ENCODE measurements at regions of chr12 and their contacts with region 1.

Region 1: GRCh38 chr12:42663621-42664020 is 74.1 kb upstream of the PRICKLE1 start:
- DNase-seq: no peak
- H3K4me3 ChIP-seq: no peak overlapping the region
- H3K27ac ChIP-seq: no peak overlapping the region
- H3K4me1 ChIP-seq: no peaks in the 10 kb centered on the region
- H3K27me3 ChIP-seq: no peaks in the 10 kb centered on the region
- CTCF ChIP-seq: no peak
- POLR2A ChIP-seq: no peak

Region 2: DNA sequence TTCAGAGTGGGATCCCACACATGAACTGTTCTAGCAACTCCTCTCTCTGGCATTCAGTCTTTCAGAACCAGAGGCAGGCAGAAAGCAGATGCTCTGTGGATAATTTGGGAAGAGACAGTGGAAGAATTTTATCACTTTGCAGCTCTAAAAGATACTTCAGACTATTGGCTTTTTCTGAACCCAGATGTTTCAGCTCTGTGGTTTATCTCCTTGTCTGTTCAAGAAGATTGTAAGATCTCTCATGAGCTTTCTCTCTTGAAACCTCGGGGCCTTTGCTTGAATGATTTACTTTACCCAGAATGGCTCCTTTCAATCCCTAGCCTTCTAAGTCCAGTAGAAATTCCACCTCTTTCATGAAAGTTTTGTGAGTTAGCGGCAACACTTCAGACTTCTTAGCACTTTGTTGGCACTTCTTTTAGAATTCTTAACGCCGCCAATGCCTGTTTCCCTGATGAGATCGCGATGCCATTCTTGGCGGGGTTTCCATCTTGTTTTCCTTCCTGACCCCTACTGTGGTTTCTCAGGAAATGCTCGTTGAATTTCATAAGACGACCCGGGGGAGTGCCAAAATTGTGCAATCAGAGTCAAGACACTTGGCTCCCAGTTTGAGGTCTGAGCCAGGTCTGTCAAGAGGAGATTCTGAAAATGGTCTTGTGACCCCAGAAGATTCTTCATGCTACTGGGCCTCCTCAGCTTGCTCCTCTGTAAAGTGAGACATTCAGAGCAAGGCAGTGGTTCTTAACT is 33.0 kb after region 1 on chr12:
- intact Hi-C with region 1: no loop called
- DNase-seq: peak; percentile 54 to 65
- H3K4me3 ChIP-seq: peak overlapping the region in 1 of 3 donors; percentile 37
- H3K27ac ChIP-seq: peak overlapping the region; percentile 43 to 85
- H3K4me1 ChIP-seq: peaks cover 0 to 8% of the 10 kb centered on the region in 2 donors
- H3K27me3 ChIP-seq: no peaks in the 10 kb centered on the region
- CTCF ChIP-seq: no peak
- POLR2A ChIP-seq: no peak

Region 3: DNA sequence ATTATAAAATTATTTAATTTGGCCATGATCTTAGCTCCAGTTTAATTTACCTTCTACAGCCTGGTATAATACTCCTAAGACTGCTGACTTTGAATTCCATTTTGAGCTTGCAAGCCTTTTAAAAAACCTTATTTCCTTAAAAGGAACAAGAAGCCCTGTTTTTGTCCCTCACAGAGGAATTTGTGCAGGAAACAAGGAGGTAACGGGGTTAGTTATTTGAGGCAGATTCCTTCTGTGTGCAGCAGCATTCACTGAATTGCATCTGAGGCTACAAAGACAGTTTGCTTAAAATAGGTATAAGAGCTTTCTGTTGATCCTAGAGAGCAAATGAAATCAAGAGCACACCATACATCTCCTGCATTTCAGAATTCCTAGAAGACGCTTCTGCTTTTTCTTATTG is 329.2 kb after region 1 on chr12:
- intact Hi-C with region 1: loop called (anchors 2 kb)
- DNase-seq: no peak
- H3K4me3 ChIP-seq: no peak overlapping the region
- H3K27ac ChIP-seq: no peak overlapping the region
- H3K4me1 ChIP-seq: no peaks in the 10 kb centered on the region
- H3K27me3 ChIP-seq: no peaks in the 10 kb centered on the region
- CTCF ChIP-seq: no peak
- POLR2A ChIP-seq: no peak